ENCODE measurements at regions of chr3 and their contacts with region 1.

Region 1: DNA sequence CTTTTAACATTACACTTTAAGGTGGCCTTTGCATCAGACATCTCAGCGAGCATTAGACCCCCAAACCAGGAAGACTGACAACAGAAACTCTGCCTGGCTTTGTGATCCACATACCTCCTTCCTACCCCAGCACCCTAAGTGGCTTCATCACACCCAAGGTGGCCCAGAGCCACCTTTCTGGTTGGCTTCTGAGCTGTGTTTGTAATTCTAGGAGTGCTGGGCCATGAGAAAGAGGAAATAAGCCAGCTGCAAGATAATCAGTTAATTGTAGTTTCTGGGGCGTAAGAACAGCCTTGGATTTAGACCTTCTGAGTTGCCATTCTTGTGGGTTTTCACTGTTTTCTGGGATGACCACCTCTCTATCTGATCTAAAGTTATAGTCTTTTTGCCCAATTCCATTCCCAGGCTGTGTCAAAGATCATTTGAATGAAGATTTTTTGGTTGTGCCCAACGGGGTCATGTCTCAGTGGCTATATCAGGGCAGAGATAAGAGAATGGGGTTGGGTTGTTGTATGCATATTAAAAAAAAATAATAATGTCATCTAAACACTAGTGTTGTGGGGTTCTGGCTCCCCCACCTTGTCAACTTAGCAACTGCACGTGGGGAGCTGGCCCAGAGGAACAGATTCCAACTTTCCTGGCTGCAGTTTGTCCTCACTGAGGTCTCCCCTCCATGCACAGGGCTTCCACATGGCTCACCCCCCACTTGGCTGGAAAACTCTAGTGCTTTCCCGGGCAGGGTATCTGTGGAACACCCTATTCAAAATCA is 234.8 kb upstream of the WNT5A start:
- DNase-seq: no peak
- ATAC-seq: peak; percentile 66
- H3K4me3 ChIP-seq: no peak overlapping the region
- H3K27ac ChIP-seq: no peak overlapping the region
- H3K4me1 ChIP-seq: peaks cover 37% of the 10 kb centered on the region
- H3K27me3 ChIP-seq: 0 out of 4 replicates have a peak, but pooled peaks cover 0 to 1% of the 10 kb centered on the region in 2 experiments
- CTCF ChIP-seq: peak; percentile 57 to 71 (median 65)
- EP300 ChIP-seq: no peak
- POLR2A ChIP-seq: no peak
- RAD21 ChIP-seq: peak; percentile 69

Region 2: GRCh38 chr3:55434789-55435188 is 287.1 kb before region 1 on chr3:
- CTCF ChIA-PET with region 1: interaction called, 13 read pairs
- POLR2A ChIA-PET with region 1: no interaction called
- RAD21 ChIA-PET with region 1: interaction called, 8 read pairs
- SMC1A ChIA-PET with region 1: interaction called, 4 read pairs
- in situ Hi-C with region 1: no loop called
- intact Hi-C with region 1: loop called (anchors 1 kb)
- DNase-seq: no peak
- ATAC-seq: peak; percentile 89
- H3K4me3 ChIP-seq: no peak overlapping the region
- H3K27ac ChIP-seq: no peak overlapping the region
- H3K4me1 ChIP-seq: no peaks in the 10 kb centered on the region
- H3K27me3 ChIP-seq: no peaks in the 10 kb centered on the region; a peak in 2 of 4 replicates
- CTCF ChIP-seq: peak; percentile 73 to 79 (median 74)
- EP300 ChIP-seq: no peak
- POLR2A ChIP-seq: no peak
- RAD21 ChIP-seq: peak; percentile 63

Region 3: GRCh38 chr3:55485211-55485791 is 236.6 kb before region 1 on chr3:
- CTCF ChIA-PET with region 1: interaction called, 29 read pairs
- POLR2A ChIA-PET with region 1: no interaction called
- RAD21 ChIA-PET with region 1: interaction called, 43 read pairs
- SMC1A ChIA-PET with region 1: interaction called, 27 read pairs
- in situ Hi-C with region 1: loop called (anchors 5 kb)
- intact Hi-C with region 1: loop called (anchors 1 kb)
- DNase-seq: peak; percentile 32
- ATAC-seq: peak; percentile 75
- H3K4me3 ChIP-seq: peak overlapping the region; percentile 86
- H3K27ac ChIP-seq: no peak overlapping the region
- H3K4me1 ChIP-seq: peaks cover 18% of the 10 kb centered on the region
- H3K27me3 ChIP-seq: peaks cover 18 to 47% of the 10 kb centered on the region in 2 experiments
- CTCF ChIP-seq: peak; percentile 52 to 85 (median 76)
- EP300 ChIP-seq: no peak
- POLR2A ChIP-seq: no peak
- RAD21 ChIP-seq: peak; percentile 91

Region 4: DNA sequence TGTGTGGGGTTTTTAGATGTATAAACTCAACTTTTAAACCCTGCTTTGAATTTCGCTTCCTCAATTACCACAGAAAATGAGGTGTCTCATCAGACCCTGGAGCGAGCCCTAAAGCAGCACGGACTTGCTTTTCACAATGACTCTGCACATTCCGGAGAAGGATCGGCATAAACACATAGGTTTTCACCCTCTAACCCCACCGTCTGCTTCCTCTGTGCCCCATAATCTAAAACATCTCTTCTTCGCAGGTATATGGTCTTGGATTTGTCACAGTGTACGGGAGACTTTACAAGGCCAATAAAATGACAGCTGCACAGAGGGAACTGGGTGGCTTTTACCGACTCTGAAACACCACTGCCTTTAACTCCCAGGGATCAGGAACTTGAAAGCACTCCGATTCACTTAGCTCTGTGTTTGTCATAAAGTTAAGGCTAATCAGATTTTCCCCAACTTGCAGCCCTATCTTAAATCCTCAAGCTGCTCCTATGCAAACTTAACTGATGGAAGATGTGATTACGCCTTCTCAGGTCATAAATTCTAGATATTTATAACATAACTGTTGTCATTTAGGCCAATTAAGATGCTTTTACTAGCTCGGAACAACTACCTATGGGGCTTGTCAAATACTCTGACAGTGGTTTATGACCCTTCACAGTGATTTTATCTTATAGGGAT is 101.4 kb before region 1 on chr3:
- CTCF ChIA-PET with region 1: interaction called, 4 read pairs
- POLR2A ChIA-PET with region 1: no interaction called
- RAD21 ChIA-PET with region 1: interaction called, 5 read pairs
- SMC1A ChIA-PET with region 1: interaction called, 6 read pairs
- in situ Hi-C with region 1: no loop called
- intact Hi-C with region 1: loop called (anchors 5 kb)
- DNase-seq: peak; percentile 59
- ATAC-seq: peak; percentile 84
- H3K4me3 ChIP-seq: peak overlapping the region; percentile 18; the same call in 1 of the 2 replicates
- H3K27ac ChIP-seq: peak overlapping the region; percentile 75
- H3K4me1 ChIP-seq: peaks cover 47% of the 10 kb centered on the region
- H3K27me3 ChIP-seq: no peaks in the 10 kb centered on the region
- CTCF ChIP-seq: no peak
- EP300 ChIP-seq: no peak
- POLR2A ChIP-seq: no peak
- RAD21 ChIP-seq: no peak

Region 5: DNA sequence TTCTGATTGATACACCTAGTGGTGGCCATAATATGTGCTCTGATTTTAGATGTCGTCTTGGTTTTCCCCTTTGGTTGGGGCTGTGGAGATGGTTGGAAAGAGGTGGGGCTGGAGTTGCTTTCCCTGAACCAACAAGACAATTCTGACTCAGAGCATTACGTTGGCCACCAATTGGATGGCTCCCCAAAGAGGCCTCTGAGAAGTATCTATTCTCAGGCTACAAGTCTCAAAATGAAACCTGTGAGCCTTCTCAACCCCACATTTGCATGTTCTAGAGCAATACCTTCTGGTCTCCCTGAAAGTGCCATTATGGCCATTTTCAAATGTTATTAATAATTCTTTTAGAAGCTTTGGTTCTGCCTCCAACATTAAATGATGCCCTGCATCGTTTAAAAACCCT is 46.4 kb before region 1 on chr3:
- CTCF ChIA-PET with region 1: interaction called, 13 read pairs
- POLR2A ChIA-PET with region 1: no interaction called
- RAD21 ChIA-PET with region 1: interaction called, 5 read pairs
- SMC1A ChIA-PET with region 1: interaction called, 9 read pairs
- in situ Hi-C with region 1: no loop called
- intact Hi-C with region 1: no loop called
- DNase-seq: peak; percentile 93
- ATAC-seq: peak; percentile 99
- H3K4me3 ChIP-seq: peak overlapping the region; percentile 17; the same call in 1 of the 2 replicates
- H3K27ac ChIP-seq: peak overlapping the region; percentile 55
- H3K4me1 ChIP-seq: peaks cover 41% of the 10 kb centered on the region
- H3K27me3 ChIP-seq: no peaks in the 10 kb centered on the region
- CTCF ChIP-seq: peak; percentile 6 to 33 (median 21); a peak in 1 of 6 replicates
- EP300 ChIP-seq: peak; percentile 67 to 83; a peak in 3 of 4 replicates
- POLR2A ChIP-seq: no peak
- RAD21 ChIP-seq: peak; percentile 28; the same call in 1 of the 2 replicates

Region 6: DNA sequence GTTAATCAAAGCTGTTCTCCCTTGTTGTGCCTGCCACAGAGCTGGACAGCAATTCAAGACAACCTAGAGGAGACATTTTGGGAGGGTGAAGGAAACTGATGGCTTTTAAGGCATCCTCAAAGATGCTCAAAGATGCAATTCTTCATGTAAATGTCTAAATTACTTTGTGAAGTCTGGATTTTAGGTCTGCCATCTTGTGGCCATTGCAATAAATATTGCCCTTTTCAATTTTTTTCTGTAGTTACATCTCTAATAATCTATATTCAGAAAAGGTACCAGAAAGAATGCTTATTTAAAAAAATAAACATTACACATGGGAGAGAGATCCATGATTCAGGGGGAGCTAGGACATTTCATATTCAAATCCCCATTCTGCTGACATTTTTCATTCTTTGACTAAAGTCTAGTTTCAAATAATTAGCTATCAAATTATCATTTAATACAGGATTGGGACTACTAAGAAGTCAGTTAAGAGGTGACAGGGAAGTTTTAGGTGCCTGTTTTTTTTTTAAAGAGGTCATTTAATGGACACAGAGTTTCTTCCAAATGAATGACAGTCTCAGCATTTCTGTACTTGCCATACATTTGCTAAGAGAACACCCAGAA is 25.0 kb after region 1 on chr3:
- CTCF ChIA-PET with region 1: interaction called, 11 read pairs
- POLR2A ChIA-PET with region 1: no interaction called
- RAD21 ChIA-PET with region 1: no interaction called
- SMC1A ChIA-PET with region 1: interaction called, 4 read pairs
- in situ Hi-C with region 1: no loop called
- intact Hi-C with region 1: no loop called
- DNase-seq: no peak
- ATAC-seq: no peak
- H3K4me3 ChIP-seq: no peak overlapping the region
- H3K27ac ChIP-seq: no peak overlapping the region
- H3K4me1 ChIP-seq: no peaks in the 10 kb centered on the region
- H3K27me3 ChIP-seq: no peaks in the 10 kb centered on the region
- CTCF ChIP-seq: peak; percentile 32 to 47 (median 45); a peak in 4 of 6 replicates
- EP300 ChIP-seq: no peak
- POLR2A ChIP-seq: no peak
- RAD21 ChIP-seq: peak; percentile 48